Activated T-helper 2 cell treated with anti-CD3 and anti-CD28 coated beads, Interferon-gamma antibody, Interleukin-2, Interleukin-4, amounts not matched to agents 10 μg/mL and 5 μg/mL and 100 μg/mL, durations not matched to agents 14 hours and 24 hours and 36 hours (primary cell): ENCODE measurements at regions of chr17 and their contacts with region 1.

Region 1: DNA sequence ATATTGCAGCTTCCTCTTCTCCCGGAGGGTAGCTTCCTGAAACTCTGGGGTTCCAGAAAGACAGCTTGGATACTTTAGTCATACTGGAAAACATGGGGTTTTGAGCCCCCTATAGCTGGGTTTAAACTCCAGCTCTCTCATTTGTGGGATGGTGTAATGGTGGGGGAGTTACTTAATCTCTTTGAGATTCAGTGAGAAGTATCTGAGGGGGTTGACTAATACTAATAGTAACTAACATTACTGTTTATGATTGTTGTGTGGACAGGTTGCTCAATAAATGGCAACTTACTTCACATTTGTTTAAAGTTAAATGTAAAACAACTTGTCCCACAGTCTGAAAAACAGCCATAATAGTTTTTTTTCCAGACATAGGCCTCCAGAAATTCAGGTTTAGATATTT is 5.1 kb upstream of the SUZ12 start:
- DNase-seq: no peak
- H3K4me3 Mint-ChIP-seq: no peak overlapping the region
- H3K27ac Mint-ChIP-seq: no peak overlapping the region
- H3K4me1 Mint-ChIP-seq: no peaks in the 10 kb centered on the region
- H3K27me3 Mint-ChIP-seq: no peaks in the 10 kb centered on the region

Region 2: DNA sequence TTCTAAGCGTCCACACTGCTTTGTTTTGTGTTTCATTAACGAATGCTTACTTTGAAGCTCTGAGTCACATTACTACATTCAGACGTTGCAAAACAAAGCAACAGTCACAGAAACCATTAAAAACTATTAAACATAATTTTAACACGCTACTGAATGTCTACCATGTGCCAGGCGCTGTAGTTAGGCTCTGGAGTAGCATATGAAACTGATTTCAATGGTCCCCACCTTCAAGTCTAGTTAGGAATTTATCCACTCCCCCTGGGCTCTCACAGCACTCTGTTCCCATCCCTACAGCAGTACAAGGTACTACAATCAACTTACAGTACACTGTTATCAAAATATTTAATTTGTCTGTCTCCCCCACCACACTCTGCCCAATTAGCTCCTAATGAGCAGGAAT is 30.9 kb before region 1 on chr17:
- intact Hi-C with region 1: loop called (anchors 2 kb)
- DNase-seq: no peak
- H3K4me3 Mint-ChIP-seq: no peak overlapping the region
- H3K27ac Mint-ChIP-seq: no peak overlapping the region
- H3K4me1 Mint-ChIP-seq: peaks cover 10% of the 10 kb centered on the region
- H3K27me3 Mint-ChIP-seq: no peaks in the 10 kb centered on the region

Region 3: DNA sequence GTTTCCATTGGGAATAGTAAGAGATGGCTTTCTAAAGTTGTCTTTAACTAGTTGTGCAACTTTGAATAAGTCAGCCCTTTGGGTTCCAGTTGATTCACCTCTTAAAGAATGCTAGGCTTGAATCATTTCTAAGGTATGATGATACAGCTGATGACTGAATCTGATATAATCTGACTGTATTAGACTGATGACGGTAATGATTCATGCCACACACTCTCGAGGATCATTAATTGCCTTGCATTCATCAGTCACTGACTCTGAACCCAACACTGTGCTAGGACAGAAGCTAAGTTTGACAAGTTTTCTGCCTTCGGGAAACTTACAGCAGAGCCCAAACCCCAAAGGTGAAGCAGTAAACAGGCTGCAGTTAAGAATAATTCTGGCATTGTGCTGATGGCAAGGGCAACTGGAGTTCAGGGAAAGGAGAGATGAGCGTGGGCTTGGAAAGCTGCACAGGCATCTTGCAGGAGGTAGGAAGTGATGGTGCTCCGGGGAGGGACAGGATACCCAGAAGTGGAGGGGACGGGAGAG is 1335.6 kb after region 1 on chr17:
- intact Hi-C with region 1: no loop called
- DNase-seq: no peak
- H3K4me3 Mint-ChIP-seq: no peak overlapping the region
- H3K27ac Mint-ChIP-seq: no peak overlapping the region
- H3K4me1 Mint-ChIP-seq: no peaks in the 10 kb centered on the region
- H3K27me3 Mint-ChIP-seq: no peaks in the 10 kb centered on the region